Activated T-helper 1 cell treated with anti-CD3 and anti-CD28 coated beads, Interleukin-12 subunit alpha, Interleukin-12 subunit beta, Interleukin-2, Interleukin-4 antibody, amounts not matched to agents 30 ng/mL and 10 ng/mL and 1 ng/mL, durations not matched to agents 14 hours and 24 hours and 36 hours (primary cell): ENCODE measurements at regions of chr11 and their contacts with region 1.

Region 1: DNA sequence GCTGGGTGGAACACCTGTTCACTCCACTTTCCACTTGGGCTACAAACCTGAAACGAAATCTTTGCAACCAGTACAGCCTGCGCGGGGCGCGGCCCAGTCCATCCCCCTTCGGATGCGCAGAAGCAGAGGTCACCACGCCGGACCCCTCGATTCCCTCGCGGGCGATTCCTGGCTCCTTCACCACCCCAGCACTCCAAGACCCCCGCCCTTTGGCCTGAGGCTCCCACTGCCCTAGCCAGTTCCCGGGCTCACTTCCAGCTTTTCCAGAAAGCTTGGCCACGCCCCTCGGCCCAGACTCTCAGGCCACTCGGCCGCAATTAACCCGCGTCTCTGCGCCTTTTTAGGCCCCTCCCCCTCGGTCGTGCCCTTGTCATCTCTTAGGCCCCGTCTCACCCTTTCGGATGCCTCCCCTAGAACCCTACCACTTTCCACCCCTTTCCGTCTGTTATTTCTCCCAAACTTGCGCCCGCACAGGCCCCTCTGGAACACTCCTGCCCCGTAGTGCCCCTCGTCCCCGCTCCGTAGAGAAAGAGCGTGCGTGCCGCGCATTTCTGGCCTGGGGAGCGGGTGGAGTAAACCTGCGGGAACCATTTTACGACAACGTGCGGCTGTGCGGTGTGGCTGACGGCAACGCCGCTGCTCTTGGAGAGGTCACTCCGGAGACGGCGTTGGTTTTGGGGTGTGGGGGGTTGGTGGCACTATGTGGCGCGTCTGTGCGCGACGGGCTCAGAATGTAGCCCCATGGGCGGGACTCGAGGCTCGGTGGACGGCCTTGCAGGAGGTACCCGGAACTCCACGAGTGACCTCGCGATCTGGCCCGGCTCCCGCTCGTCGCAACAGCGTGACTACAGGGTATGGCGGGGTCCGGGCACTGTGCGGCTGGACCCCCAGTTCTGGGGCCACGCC is at the start of gene DLAT:
- DNase-seq: peak; percentile 80
- H3K4me3 Mint-ChIP-seq: peak within 1 kb of the TSS; percentile 95
- H3K27ac Mint-ChIP-seq: peak within 1 kb of the TSS; percentile 100
- H3K4me1 Mint-ChIP-seq: peaks cover 14% of the 10 kb centered on the region
- H3K27me3 Mint-ChIP-seq: no peaks in the 10 kb centered on the region
- total RNA-seq, gene DLAT: 52.0 and 54.5 TPM in 2 replicates

Region 2: GRCh38 chr11:111344032-111344431 is 681.0 kb before region 1 on chr11:
- intact Hi-C with region 1: no loop called
- DNase-seq: no peak
- H3K4me3 Mint-ChIP-seq: no peak overlapping the region
- H3K27ac Mint-ChIP-seq: no peak overlapping the region
- H3K4me1 Mint-ChIP-seq: peaks cover 5% of the 10 kb centered on the region
- H3K27me3 Mint-ChIP-seq: no peaks in the 10 kb centered on the region

Region 3: DNA sequence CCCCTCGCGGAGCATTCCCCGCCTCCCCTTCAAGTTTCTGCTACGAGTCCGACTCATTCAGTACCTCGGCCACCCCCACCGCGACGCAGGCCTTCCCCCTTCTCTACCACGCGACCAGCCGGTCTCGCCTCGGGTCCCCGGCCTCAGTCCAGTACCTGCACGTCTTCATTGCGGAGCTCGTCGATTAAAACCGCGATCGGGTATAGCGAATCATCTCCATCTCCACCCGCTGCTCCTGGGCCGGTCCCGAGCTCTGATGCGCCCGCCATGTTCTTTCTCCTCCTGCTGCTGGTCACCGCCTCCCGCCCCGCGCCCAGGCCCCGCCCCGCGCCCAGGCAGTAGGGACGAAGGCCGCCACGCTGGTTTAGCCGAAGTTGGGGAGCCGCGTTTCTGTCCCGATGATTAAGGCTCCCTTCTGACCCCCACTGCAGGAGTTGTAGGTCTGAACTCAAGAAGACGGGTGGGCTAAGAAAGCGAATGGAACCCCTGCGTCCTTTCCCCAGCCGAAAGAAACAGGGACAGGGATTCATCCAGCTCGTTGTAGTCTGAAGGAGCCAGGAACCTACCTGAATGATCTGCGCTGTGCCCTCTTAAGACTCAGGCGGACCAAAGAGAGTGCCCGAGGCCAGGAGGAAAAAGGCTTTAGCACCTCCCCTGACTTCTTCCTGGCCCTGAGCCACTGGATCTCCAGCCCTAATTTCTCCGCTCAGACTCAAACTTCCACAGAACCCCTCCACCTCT is 258.8 kb before region 1 on chr11 and contains the start of gene PPP2R1B:
- intact Hi-C with region 1: loop called (anchors 5 kb)
- DNase-seq: peak; percentile 60
- H3K4me3 Mint-ChIP-seq: peak within 1 kb of the TSS; percentile 96
- H3K27ac Mint-ChIP-seq: peak within 1 kb of the TSS; percentile 97
- H3K4me1 Mint-ChIP-seq: peaks cover 43% of the 10 kb centered on the region
- H3K27me3 Mint-ChIP-seq: no peaks in the 10 kb centered on the region
- total RNA-seq, gene PPP2R1B: 58.1 and 61.4 TPM in 2 replicates

Region 4: DNA sequence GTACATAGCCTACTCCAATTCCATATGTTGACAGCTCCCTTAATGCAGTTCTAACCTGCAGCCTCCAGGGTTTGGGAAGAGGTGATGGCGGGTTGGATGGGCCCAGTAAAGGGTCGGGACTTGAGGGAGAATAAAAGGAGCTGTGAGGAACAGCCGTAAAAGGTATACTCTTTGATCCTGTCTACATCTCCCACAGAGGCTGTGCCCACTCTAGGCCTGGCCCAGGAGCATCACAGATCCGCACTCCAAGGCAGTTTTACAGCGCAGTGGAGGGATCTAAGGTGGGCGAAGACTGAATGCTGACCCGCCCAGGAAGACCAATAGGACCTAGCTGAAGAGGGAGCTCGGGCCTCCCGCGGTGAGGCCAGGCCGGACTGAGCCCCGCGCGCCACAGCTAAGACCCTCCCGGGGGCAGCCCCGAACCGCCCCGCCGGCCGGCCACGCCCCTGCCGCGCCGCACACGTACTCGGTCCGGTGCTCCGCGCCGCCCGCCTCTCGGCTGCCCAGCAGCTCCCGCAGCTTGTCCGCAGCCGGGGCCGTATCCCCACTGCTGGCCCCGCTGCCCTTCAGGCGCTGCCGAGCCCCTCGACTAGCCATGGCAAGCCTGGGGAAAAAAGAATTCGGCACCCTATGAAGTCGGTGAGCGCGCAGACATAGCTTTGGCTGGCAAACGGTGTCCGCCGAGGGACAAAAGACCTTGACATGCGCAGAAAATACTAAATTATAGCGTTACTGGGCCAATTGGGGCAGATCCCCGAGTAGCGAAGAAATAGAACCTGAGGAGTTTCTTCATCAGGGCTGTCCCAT is 153.9 kb before region 1 on chr11 and contains the start of gene ALG9:
- intact Hi-C with region 1: loop called (anchors 2 kb)
- DNase-seq: peak; percentile 85
- H3K4me3 Mint-ChIP-seq: peak within 1 kb of the TSS; percentile 89
- H3K27ac Mint-ChIP-seq: peak within 1 kb of the TSS; percentile 90
- H3K4me1 Mint-ChIP-seq: peaks cover 32% of the 10 kb centered on the region
- H3K27me3 Mint-ChIP-seq: no peaks in the 10 kb centered on the region
- total RNA-seq, gene ALG9: 29.3 and 31.8 TPM in 2 replicates

Region 5: DNA sequence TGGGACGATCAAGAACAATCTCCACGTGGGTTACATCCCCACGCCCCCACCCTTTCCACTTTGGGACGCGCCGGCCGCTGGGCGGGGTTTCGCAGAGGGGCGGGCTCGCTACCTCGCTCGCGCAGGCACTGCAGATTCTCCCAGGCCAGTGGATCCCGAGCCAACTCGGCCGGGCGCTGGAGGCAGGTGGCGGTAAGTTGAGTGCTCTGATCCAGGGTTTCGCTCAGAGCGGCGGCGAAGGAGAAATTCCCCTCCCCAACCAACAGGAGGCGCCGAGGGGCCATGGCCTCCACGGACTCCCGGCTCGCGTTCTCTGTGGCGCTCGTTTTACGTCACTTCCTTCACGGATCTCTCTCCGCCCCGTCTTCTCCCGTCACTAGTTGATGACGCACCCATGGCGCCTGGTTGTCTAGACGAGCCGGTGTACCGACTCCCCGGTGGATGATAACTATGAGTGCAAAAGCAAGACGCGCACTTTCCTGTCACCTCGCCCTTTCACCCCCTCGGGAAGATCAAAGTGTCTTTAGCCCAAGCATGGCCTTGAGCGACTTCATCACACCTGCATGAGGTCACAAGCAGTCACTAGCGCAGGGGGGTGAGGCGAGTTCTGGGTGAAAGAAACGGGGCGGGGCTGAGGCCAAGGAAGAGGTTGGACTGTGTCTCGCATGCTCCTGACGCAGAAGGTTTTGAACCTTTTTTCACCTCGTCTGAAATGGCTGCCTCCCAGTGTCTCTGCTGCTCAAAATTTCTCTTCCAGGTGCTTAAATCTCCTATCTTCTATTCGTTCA is 146.0 kb before region 1 on chr11 and contains the starts of genes CFAP68 and FDXACB1:
- intact Hi-C with region 1: loop called (anchors 1 kb)
- DNase-seq: peak; percentile 92
- H3K4me3 Mint-ChIP-seq: peak within 1 kb of the TSS; percentile 94
- H3K27ac Mint-ChIP-seq: peak within 1 kb of the TSS; percentile 100
- H3K4me1 Mint-ChIP-seq: peaks cover 26% of the 10 kb centered on the region
- H3K27me3 Mint-ChIP-seq: peaks cover 2% of the 10 kb centered on the region
- total RNA-seq, gene CFAP68: 17.7 and 22.3 TPM in 2 replicates
- total RNA-seq, gene FDXACB1: 7.9 and 9.4 TPM in 2 replicates

Region 6: GRCh38 chr11:111932611-111932950 is 92.4 kb before region 1 on chr11:
- intact Hi-C with region 1: loop called (anchors 1 kb)
- DNase-seq: no peak
- H3K4me3 Mint-ChIP-seq: no peak overlapping the region
- H3K27ac Mint-ChIP-seq: peak overlapping the region; percentile 24
- H3K4me1 Mint-ChIP-seq: peaks cover 34% of the 10 kb centered on the region
- H3K27me3 Mint-ChIP-seq: peaks cover 2% of the 10 kb centered on the region

Region 7: GRCh38 chr11:112012877-112013276 is 12.1 kb before region 1 on chr11:
- intact Hi-C with region 1: no loop called
- DNase-seq: no peak
- H3K4me3 Mint-ChIP-seq: no peak overlapping the region
- H3K27ac Mint-ChIP-seq: no peak overlapping the region
- H3K4me1 Mint-ChIP-seq: no peaks in the 10 kb centered on the region
- H3K27me3 Mint-ChIP-seq: peaks cover 8% of the 10 kb centered on the region

Region 8: DNA sequence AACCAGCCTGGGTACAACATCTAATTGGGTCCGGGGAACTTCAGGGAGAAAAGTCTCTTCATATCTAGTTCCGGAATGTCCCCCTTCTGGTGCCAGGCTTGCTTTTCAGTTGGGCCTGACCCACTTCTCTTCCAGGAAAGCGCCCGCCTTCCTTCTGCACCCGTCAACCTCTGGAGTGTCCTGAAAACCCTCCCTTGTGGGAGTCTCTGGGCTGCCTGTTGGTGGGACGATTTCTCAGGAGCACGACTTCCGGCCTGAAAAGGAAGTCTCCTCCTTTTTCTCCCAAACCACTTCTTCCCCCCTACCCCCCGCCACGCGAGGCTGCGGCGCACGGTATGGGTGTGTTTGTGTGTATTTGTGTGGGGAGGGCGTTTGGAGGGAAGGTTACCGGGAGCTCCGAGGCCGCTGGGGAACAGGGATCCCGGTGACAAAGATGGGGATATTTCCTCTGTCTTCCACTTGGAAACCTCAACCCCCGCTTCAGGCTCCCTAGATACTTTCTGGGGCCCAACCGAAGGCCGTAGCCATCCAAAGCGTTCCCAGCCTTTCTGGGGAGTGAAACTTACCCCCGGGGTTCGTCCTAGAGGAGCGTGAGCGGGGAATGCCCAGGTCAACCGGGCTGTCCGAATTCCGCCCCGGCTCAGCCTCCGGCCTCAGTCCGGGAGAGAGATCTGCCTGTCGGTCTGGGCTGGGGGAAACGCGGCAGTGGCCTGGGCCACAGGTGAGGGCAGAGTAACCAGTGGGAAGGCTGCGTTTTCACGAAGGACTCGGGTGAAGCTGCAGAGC is 49.2 kb after region 1 on chr11 and contains the start of gene NKAPD1:
- intact Hi-C with region 1: loop called (anchors 1 kb)
- DNase-seq: peak; percentile 77
- H3K4me3 Mint-ChIP-seq: peak within 1 kb of the TSS; percentile 94
- H3K27ac Mint-ChIP-seq: peak within 1 kb of the TSS; percentile 95
- H3K4me1 Mint-ChIP-seq: peaks cover 39% of the 10 kb centered on the region
- H3K27me3 Mint-ChIP-seq: no peaks in the 10 kb centered on the region
- total RNA-seq, gene NKAPD1: 29.1 and 33.0 TPM in 2 replicates

Region 9: GRCh38 chr11:112280268-112281126 is 255.5 kb after region 1 on chr11:
- intact Hi-C with region 1: loop called (anchors 2 kb)
- DNase-seq: peak; percentile 64
- H3K4me3 Mint-ChIP-seq: peak overlapping the region; percentile 85
- H3K27ac Mint-ChIP-seq: peak overlapping the region; percentile 77
- H3K4me1 Mint-ChIP-seq: peaks cover 39% of the 10 kb centered on the region
- H3K27me3 Mint-ChIP-seq: peaks cover 4% of the 10 kb centered on the region